ENCODE measurements at regions of chr1 and their contacts with region 1.

Region 1: GRCh38 chr1:155308493-155309422 is at the start of gene FDPS:
- DNase-seq: peak; percentile 99
- ATAC-seq: peak; percentile 99 to 100 (median 100)
- H3K4me3 ChIP-seq: peak within 1 kb of the TSS; percentile 66 to 96 (median 80)
- H3K27ac ChIP-seq: peak within 1 kb of the TSS; percentile 80 to 95 (median 90)
- H3K4me1 ChIP-seq: peaks cover 4 to 34% (median 18%) of the 10 kb centered on the region in 12 donors
- H3K27me3 ChIP-seq: no peaks in the 10 kb centered on the region
- CTCF ChIP-seq: peak in 3 of 12 donors; percentile 15 to 19 (median 18)
- POLR2A ChIP-seq: peak in 1 of 2 donors; percentile 77
- total RNA-seq, gene FDPS: 63.7 to 87.9 (median 77.6) TPM

Region 2: DNA sequence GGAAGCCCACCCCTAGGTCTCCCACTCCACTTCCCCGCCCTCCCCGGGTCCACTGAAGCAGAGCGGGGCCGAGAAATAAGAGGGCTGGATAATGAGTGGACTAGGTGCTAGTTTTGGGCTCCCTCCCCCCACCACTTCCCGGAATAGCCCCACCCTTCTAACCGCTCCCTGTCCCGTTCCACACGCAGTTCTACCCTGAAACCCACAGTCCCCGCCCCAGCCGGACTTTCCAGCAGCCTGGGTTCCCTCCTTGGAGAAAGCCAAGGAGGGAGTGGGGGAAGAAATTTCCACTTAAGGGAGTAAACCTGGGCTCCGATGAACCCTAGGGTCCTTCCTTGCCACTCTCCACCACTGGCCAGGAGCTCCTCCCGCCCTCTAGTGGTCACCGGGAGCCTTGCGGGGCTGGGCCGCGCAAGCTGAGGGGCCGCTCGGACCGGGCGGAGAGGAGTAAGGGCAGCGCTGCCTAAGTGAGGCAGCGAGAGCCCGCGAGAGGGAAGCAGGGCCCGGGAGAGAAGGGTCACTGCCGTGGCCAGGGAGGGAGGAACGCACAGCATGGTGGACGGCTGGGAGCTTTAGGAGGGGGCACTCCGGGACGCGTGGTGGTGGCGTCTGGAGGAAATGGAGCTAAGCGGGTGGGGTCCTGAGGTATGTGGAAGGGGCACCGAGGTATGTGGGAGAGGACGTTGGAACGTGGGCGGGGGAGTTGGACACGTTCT is 115.3 kb before region 1 on chr1:
- intact Hi-C with region 1: no loop called
- DNase-seq: peak; percentile 84 to 94 (median 87)
- ATAC-seq: peak; percentile 83 to 91 (median 87)
- H3K4me3 ChIP-seq: peak overlapping the region in 11 of 12 donors; percentile 28 to 70 (median 59)
- H3K27ac ChIP-seq: peak overlapping the region; percentile 23 to 95 (median 81)
- H3K4me1 ChIP-seq: peaks cover 0 to 33% (median 24%) of the 10 kb centered on the region in 12 donors
- H3K27me3 ChIP-seq: no peaks in the 10 kb centered on the region
- CTCF ChIP-seq: peak in 11 of 12 donors; percentile 92 to 100 (median 97)
- POLR2A ChIP-seq: peak in 1 of 2 donors; percentile 43

Region 3: GRCh38 chr1:155250633-155251449 is 57.9 kb before region 1 on chr1:
- intact Hi-C with region 1: loop called in 2 of 10 experiments (anchors 2 to 5 kb)
- DNase-seq: peak; percentile 92 to 96 (median 93)
- ATAC-seq: peak; percentile 79 to 85 (median 84)
- H3K4me3 ChIP-seq: peak overlapping the region in 9 of 12 donors; percentile 17 to 60 (median 36)
- H3K27ac ChIP-seq: peak overlapping the region in 8 of 12 donors; percentile 29 to 57 (median 46)
- H3K4me1 ChIP-seq: peaks cover 7 to 38% (median 27%) of the 10 kb centered on the region in 12 donors
- H3K27me3 ChIP-seq: no peaks in the 10 kb centered on the region
- CTCF ChIP-seq: peak; percentile 99 to 100 (median 100)
- POLR2A ChIP-seq: no peak

Region 4: GRCh38 chr1:155261852-155262673 is 46.7 kb before region 1 on chr1 and contains the start of gene SCAMP3:
- intact Hi-C with region 1: loop called in 2 of 10 experiments (anchors 1 to 5 kb)
- DNase-seq: peak; percentile 95 to 98 (median 97)
- ATAC-seq: peak; percentile 97 to 99 (median 98)
- H3K4me3 ChIP-seq: peak within 1 kb of the TSS; percentile 61 to 98 (median 80)
- H3K27ac ChIP-seq: peak within 1 kb of the TSS in 11 of 12 donors; percentile 68 to 91 (median 84)
- H3K4me1 ChIP-seq: peaks cover 6 to 31% (median 20%) of the 10 kb centered on the region in 12 donors
- H3K27me3 ChIP-seq: no peaks in the 10 kb centered on the region
- CTCF ChIP-seq: no peak
- POLR2A ChIP-seq: peak; percentile 31 to 77
- total RNA-seq, gene SCAMP3: 51.2 to 92.8 (median 65.8) TPM

Region 5: DNA sequence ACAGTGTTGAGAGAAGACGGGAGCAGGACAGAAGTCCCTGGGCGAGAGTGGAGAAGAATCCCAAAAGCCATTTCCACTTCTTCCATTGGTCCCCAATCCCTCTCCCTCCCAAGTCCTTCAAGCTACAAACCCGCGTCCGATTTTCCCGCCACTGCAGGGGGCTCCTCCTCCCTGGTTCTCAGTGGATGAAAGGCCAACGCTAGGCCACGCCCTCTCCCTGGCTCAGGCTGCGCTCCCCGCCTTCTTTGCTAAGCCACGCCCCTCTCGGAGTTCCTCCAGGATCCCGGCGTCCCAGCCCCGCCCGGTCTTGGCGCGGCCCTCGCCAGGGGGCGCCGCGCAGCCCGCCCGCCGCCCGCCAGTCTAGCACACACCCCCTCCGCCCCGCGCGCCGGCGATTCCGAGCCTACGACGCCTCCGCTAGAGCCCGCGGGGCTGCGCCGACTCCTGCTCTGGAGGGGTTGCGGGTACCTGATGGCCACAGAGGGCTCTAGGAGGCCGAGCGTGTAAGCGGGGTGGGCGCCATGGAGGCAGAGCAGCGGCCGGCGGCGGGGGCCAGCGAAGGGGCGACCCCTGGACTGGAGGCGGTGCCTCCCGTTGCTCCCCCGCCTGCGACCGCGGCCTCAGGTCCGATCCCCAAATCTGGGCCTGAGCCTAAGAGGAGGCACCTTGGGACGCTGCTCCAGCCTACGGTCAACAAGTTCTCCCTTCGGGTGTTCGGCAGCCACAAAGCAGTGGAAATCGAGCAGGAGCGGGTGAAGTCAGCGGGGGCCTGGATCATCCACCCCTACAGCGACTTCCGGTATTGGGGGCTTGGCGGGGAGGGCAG is 31.5 kb before region 1 on chr1 and contains the start of gene HCN3:
- intact Hi-C with region 1: loop called in 5 of 10 experiments (anchors 1 to 2 kb)
- DNase-seq: peak; percentile 98 to 99 (median 98)
- ATAC-seq: peak; percentile 89 to 94 (median 92)
- H3K4me3 ChIP-seq: peak within 1 kb of the TSS; percentile 33 to 82 (median 70)
- H3K27ac ChIP-seq: peak within 1 kb of the TSS; percentile 16 to 69 (median 52)
- H3K4me1 ChIP-seq: peaks cover 4 to 31% (median 21%) of the 10 kb centered on the region in 12 donors
- H3K27me3 ChIP-seq: no peaks in the 10 kb centered on the region
- CTCF ChIP-seq: peak; percentile 58 to 98 (median 86)
- POLR2A ChIP-seq: peak in 1 of 2 donors; percentile 25
- total RNA-seq, gene HCN3: 0.49 to 1.7 (median 0.99) TPM

Measured in heart left ventricle (tissue), 16 donors.